A673 (cell line): ENCODE measurements at regions of chr11 and their contacts with region 1.

Region 1: GRCh38 chr11:10612216-10612862 is 43.9 kb upstream of the LYVE1 start:
- DNase-seq: no peak
- H3K4me3 ChIP-seq: no peak overlapping the region
- H3K27ac ChIP-seq: no peak overlapping the region
- H3K4me1 ChIP-seq: peaks cover 6% of the 10 kb centered on the region
- H3K27me3 ChIP-seq: no peaks in the 10 kb centered on the region
- CTCF ChIP-seq: no peak

Region 2: GRCh38 chr11:10355257-10355661 is 257.1 kb before region 1 on chr11:
- CTCF ChIA-PET with region 1: no interaction called
- POLR2A ChIA-PET with region 1: interaction called, 14 read pairs
- intact Hi-C with region 1: no loop called
- DNase-seq: no peak
- H3K4me3 ChIP-seq: no peak overlapping the region
- H3K27ac ChIP-seq: no peak overlapping the region
- H3K4me1 ChIP-seq: peaks cover 14% of the 10 kb centered on the region
- H3K27me3 ChIP-seq: no peaks in the 10 kb centered on the region
- CTCF ChIP-seq: no peak

Region 3: DNA sequence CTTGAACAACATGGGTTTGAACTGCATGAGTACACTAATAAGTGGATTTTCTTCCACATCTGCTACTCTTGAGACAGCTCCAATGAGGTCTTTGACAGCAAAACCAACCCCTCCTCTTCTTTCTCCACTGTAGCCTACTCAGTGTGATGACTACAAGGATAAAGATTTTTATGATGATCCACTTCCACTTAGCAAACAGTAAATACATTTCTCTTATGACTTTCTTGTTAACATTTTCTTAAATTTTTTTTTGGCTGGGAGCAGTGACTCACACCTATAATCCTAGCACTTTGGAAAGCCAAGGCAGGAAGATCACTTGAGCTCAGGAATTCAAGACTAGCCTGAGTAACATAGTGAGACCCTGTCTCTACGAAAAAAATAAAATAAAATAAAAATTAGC is 206.3 kb after region 1 on chr11:
- CTCF ChIA-PET with region 1: no interaction called
- POLR2A ChIA-PET with region 1: no interaction called
- intact Hi-C with region 1: no loop called
- DNase-seq: no peak
- H3K4me3 ChIP-seq: no peak overlapping the region
- H3K27ac ChIP-seq: no peak overlapping the region
- H3K4me1 ChIP-seq: no peaks in the 10 kb centered on the region
- H3K27me3 ChIP-seq: no peaks in the 10 kb centered on the region
- CTCF ChIP-seq: no peak